B cell (primary cell): ENCODE measurements at regions of chr4 and their contacts with region 1.

Region 1: DNA sequence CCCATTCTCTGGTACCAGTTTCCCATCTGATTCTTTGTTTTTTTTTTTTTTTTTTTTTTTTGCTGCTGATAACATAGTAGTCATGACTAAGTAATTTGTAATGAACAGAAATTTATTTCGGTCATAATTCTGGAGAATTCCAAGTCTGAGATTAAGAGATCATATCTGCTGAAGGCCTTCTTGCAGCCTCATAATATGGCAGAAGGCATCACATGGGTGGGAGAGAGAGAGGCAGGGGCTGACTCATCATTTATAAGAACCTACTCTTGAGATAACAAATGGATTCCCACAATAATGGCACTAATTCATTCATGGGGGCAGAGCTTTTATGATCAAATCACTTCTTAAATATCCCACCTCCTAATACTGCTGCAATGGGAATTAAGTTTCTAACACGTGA is 1034.3 kb downstream of the STIM2 start:
- DNase-seq: no peak
- ATAC-seq: no peak
- H3K4me3 ChIP-seq: no peak overlapping the region
- H3K4me3 Mint-ChIP-seq: no peak overlapping the region
- H3K27ac ChIP-seq: no peak overlapping the region
- H3K27ac Mint-ChIP-seq: no peak overlapping the region
- H3K4me1 ChIP-seq: no peaks in the 10 kb centered on the region
- H3K4me1 Mint-ChIP-seq: no peaks in the 10 kb centered on the region
- H3K27me3 ChIP-seq: no peaks in the 10 kb centered on the region
- H3K27me3 Mint-ChIP-seq: no peaks in the 10 kb centered on the region
- CTCF ChIP-seq: no peak

Region 2: GRCh38 chr4:27861381-27862201 is 33.4 kb before region 1 on chr4:
- CTCF ChIA-PET with region 1: no interaction called
- POLR2A ChIA-PET with region 1: no interaction called
- intact Hi-C with region 1: loop called (anchors 1 kb)
- DNase-seq: no peak
- ATAC-seq: no peak
- H3K4me3 ChIP-seq: no peak overlapping the region
- H3K4me3 Mint-ChIP-seq: no peak overlapping the region
- H3K27ac ChIP-seq: no peak overlapping the region
- H3K27ac Mint-ChIP-seq: no peak overlapping the region
- H3K4me1 ChIP-seq: no peaks in the 10 kb centered on the region
- H3K4me1 Mint-ChIP-seq: no peaks in the 10 kb centered on the region
- H3K27me3 ChIP-seq: no peaks in the 10 kb centered on the region
- H3K27me3 Mint-ChIP-seq: no peaks in the 10 kb centered on the region
- CTCF ChIP-seq: no peak